ENCODE measurements at regions of chr12 and their contacts with region 1.

Region 1: DNA sequence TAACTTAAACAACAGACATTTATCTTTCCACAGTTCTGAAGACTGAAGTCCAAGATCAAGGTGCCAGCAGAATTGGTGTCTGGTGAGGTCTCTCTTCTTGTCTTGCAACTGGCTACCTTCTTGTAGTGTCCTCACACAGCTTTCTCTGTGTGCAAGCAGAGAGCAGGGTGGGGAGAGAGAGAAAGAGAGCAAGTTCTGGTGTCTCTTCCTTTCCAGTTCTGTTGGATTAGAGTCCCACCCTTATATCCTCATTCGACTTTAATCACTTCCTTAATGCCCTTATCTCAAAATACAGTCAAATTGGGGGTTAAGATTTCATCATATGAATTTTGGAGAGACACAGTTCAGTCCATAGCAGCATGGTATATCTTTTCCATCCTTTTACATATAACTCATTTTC is 40.8 kb downstream of the DYRK2 start:
- DNase-seq: no peak
- H3K4me3 Mint-ChIP-seq: no peak overlapping the region
- H3K27ac Mint-ChIP-seq: no peak overlapping the region
- H3K4me1 Mint-ChIP-seq: peaks cover 6% of the 10 kb centered on the region
- H3K27me3 Mint-ChIP-seq: no peaks in the 10 kb centered on the region
- CTCF ChIP-seq: no peak

Region 2: GRCh38 chr12:68310370-68310769 is 621.0 kb after region 1 on chr12:
- CTCF ChIA-PET with region 1: interaction called, 10 read pairs
- intact Hi-C with region 1: no loop called
- DNase-seq: no peak
- H3K4me3 Mint-ChIP-seq: no peak overlapping the region
- H3K27ac Mint-ChIP-seq: no peak overlapping the region
- H3K4me1 Mint-ChIP-seq: no peaks in the 10 kb centered on the region
- H3K27me3 Mint-ChIP-seq: no peaks in the 10 kb centered on the region
- CTCF ChIP-seq: no peak